Activated CD8-positive, alpha-beta T cell treated with anti-CD3 and anti-CD28 coated beads, Interleukin-2, amount 10 ng/mL, durations not matched to agents 7 days and 5 days (primary cell): ENCODE measurements at regions of chr15 and their contacts with region 1.

Region 1: GRCh38 chr15:51982013-51982769 is 10.6 kb upstream of the LEO1 start:
- DNase-seq: peak; percentile 77
- ATAC-seq: peak; percentile 99
- H3K4me3 Mint-ChIP-seq: peak overlapping the region; percentile 54
- H3K27ac Mint-ChIP-seq: peak overlapping the region; percentile 89
- H3K4me1 Mint-ChIP-seq: peaks cover 16% of the 10 kb centered on the region
- H3K27me3 Mint-ChIP-seq: no peaks in the 10 kb centered on the region

Region 2: DNA sequence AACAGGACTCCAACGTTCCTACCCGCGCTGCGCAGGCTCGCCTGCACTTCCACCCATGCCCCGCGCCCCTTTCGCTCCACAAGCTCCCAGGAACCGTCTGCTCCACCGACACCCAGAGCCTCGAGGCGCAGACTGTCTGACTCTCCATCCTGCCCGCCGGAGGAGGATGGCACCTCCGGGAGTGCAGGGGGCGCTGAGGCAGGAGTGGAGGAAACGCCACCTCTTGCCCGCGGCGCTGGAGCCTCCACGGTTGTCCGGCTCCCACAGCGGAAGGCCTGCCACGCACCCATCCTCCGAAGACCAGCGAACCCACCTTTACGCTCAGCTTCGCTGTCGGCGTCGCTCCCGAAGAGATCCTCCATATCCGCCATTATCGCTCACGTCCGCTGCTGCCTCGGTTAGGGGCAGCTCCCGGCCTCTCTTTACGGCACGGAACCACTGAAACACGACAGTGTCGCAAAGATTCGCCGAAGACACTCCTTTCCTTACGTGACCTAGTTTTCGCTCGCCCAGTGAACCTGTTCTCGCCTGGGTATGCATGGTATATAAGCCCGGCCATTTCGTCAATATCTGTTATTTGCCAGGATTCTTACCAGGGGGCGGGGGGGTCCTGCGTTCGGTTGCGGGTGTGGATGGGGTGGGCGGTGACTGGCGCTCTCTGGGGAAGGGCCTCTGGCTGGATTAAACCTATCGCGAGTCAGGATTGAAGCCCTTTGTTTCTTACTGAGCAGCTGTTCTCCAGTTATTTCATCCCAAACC is 10.6 kb before region 1 on chr15 and contains the start of gene LEO1:
- CTCF ChIA-PET with region 1: interaction called, 17 read pairs
- POLR2A ChIA-PET with region 1: interaction called, 29 read pairs
- DNase-seq: peak; percentile 95
- ATAC-seq: peak; percentile 88
- H3K4me3 Mint-ChIP-seq: peak within 1 kb of the TSS; percentile 88
- H3K27ac Mint-ChIP-seq: peak within 1 kb of the TSS; percentile 89
- H3K4me1 Mint-ChIP-seq: peaks cover 23% of the 10 kb centered on the region
- H3K27me3 Mint-ChIP-seq: no peaks in the 10 kb centered on the region
- total RNA-seq, gene LEO1: 30.3 to 33.4 TPM

Region 3: GRCh38 chr15:52019388-52020220 is 37.4 kb after region 1 on chr15:
- CTCF ChIA-PET with region 1: no interaction called
- POLR2A ChIA-PET with region 1: interaction called, 10 read pairs
- DNase-seq: peak; percentile 74
- ATAC-seq: peak; percentile 63
- H3K4me3 Mint-ChIP-seq: peak overlapping the region; percentile 97
- H3K27ac Mint-ChIP-seq: peak overlapping the region; percentile 99
- H3K4me1 Mint-ChIP-seq: peaks cover 38% of the 10 kb centered on the region
- H3K27me3 Mint-ChIP-seq: peaks cover 4% of the 10 kb centered on the region

Region 4: GRCh38 chr15:52124270-52124880 is 142.2 kb after region 1 on chr15:
- CTCF ChIA-PET with region 1: no interaction called
- POLR2A ChIA-PET with region 1: no interaction called
- DNase-seq: no peak
- ATAC-seq: no peak
- H3K4me3 Mint-ChIP-seq: no peak overlapping the region
- H3K27ac Mint-ChIP-seq: no peak overlapping the region
- H3K4me1 Mint-ChIP-seq: no peaks in the 10 kb centered on the region
- H3K27me3 Mint-ChIP-seq: no peaks in the 10 kb centered on the region

Region 5: GRCh38 chr15:52139599-52140491 is 157.7 kb after region 1 on chr15:
- CTCF ChIA-PET with region 1: interaction called, 10 read pairs
- POLR2A ChIA-PET with region 1: interaction called, 3 read pairs
- DNase-seq: peak; percentile 81
- ATAC-seq: peak; percentile 80
- H3K4me3 Mint-ChIP-seq: no peak overlapping the region
- H3K27ac Mint-ChIP-seq: no peak overlapping the region
- H3K4me1 Mint-ChIP-seq: peaks cover 24% of the 10 kb centered on the region
- H3K27me3 Mint-ChIP-seq: no peaks in the 10 kb centered on the region